ENCODE measurements at regions of chr6 and their contacts with region 1.

Region 1: DNA sequence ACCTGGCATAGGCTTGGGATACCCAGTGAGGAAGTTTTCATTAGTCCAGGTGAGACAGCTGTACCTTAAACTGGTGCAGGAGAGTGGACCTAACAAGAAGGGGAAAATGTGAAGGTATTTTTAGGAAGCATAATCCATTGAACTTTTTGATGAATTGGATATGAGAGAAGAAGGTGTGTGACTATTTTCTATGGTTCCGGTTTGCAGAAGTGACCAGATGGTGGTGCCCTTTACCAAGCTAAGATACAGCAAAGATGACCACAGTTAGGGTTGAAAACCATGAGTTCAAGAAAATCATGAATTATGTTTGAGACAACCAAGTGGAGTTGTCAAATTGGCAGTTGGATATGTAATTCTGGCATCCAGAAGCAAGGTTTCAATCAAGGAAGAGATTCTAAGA is 61.9 kb upstream of the NRSN1 start:
- DNase-seq: peak in 1 of 10 donors; percentile 42
- H3K4me3 ChIP-seq: no peak overlapping the region
- H3K27ac ChIP-seq: no peak overlapping the region
- H3K27me3 ChIP-seq: peaks cover 0 to 3% (median 0%) of the 10 kb centered on the region in 45 donors
- CTCF ChIP-seq: peak in 54 of 56 donors; percentile 15 to 75 (median 54)

Region 2: DNA sequence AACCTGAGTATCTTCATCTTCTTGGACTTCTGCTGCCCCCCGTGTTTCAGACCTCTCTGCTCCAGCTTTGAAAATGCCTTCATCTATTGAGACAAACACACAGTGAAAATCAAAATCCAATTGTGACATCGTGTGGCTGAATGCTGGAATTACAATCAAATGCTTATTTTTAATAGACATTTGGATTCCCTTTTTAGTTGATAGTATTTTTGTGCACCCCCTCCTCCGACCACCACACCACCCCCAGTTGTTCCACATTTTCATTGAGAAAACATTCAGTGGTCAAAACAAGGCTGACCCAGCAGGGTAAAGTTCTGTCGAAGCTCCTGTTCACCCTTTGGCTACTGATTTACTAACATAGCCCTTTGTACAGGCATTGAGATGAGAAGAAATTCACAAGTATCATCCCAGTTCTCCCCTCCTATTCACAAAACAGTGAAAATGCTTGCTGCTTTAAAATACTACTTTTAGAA is 141.0 kb after region 1 on chr6:
- intact Hi-C with region 1: loop called (anchors 2 kb)
- DNase-seq: peak in 2 of 10 donors; percentile 4 to 30
- H3K4me3 ChIP-seq: no peak overlapping the region
- H3K27ac ChIP-seq: no peak overlapping the region
- H3K27me3 ChIP-seq: no peaks in the 10 kb centered on the region
- CTCF ChIP-seq: peak; percentile 52 to 83 (median 70)

Region 3: GRCh38 chr6:24274441-24275083 is 210.5 kb after region 1 on chr6:
- intact Hi-C with region 1: loop called in 1 of 2 experiments (anchors 10 kb)
- DNase-seq: no peak
- H3K4me3 ChIP-seq: no peak overlapping the region
- H3K27ac ChIP-seq: no peak overlapping the region
- H3K27me3 ChIP-seq: peaks cover 0 to 2% (median 0%) of the 10 kb centered on the region in 45 donors
- CTCF ChIP-seq: peak in 55 of 56 donors; percentile 35 to 71 (median 57)

Measured in dorsolateral prefrontal cortex (tissue), 120 donors.